ENCODE measurements at regions of chr10 and their contacts with region 1.

Region 1: DNA sequence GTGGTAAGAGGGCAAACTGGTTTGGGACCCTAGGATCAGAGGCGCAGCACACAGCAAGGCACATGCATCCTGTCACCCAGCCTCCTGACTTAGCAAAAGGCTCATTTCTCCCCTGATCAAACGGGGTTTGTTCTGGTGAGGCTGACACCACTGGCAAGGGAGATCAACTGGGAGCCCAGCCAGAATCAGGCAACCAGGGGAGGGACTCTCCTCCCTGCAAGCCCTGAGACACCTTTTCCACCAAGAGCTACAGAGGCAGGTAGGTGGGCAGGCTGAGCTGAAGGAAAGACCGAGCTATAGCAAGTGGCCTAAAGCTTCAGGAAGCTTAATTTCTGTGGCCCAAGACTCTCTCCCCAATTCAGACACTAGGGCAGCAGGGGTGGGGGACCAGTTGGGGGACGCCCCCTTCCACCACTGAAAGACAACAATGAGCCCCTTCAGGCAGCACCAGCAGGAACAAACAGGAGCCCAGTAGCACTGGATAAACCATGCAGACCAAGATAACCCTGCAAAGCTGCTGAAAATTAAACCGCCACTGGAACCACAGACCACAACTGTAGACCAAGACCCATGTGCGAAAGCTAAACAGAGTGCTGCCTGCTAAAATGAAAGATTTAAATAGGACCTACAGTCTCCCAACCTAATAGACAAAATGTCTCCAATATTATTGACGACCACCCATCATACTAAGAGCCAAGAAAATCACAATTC is 27.1 kb upstream of the SAR1A start:
- DNase-seq: peak; percentile 24
- H3K4me3 Mint-ChIP-seq: no peak overlapping the region
- H3K27ac Mint-ChIP-seq: peak overlapping the region; percentile 80
- H3K4me1 Mint-ChIP-seq: peaks cover 43% of the 10 kb centered on the region
- H3K27me3 Mint-ChIP-seq: no peaks in the 10 kb centered on the region

Region 2: GRCh38 chr10:70066190-70066589 is 131.2 kb before region 1 on chr10:
- CTCF ChIA-PET with region 1: no interaction called
- POLR2A ChIA-PET with region 1: no interaction called
- DNase-seq: no peak
- H3K4me3 Mint-ChIP-seq: no peak overlapping the region
- H3K27ac Mint-ChIP-seq: no peak overlapping the region
- H3K4me1 Mint-ChIP-seq: no peaks in the 10 kb centered on the region
- H3K27me3 Mint-ChIP-seq: peaks cover 2% of the 10 kb centered on the region

Region 3: GRCh38 chr10:70355051-70356021 is 157.9 kb after region 1 on chr10:
- CTCF ChIA-PET with region 1: no interaction called
- POLR2A ChIA-PET with region 1: interaction called, 14 read pairs
- DNase-seq: no peak
- H3K4me3 Mint-ChIP-seq: peak overlapping the region; percentile 41
- H3K27ac Mint-ChIP-seq: peak overlapping the region; percentile 61
- H3K4me1 Mint-ChIP-seq: peaks cover 16% of the 10 kb centered on the region
- H3K27me3 Mint-ChIP-seq: no peaks in the 10 kb centered on the region